ENCODE measurements at regions of chr2 and their contacts with region 1.

Region 1: DNA sequence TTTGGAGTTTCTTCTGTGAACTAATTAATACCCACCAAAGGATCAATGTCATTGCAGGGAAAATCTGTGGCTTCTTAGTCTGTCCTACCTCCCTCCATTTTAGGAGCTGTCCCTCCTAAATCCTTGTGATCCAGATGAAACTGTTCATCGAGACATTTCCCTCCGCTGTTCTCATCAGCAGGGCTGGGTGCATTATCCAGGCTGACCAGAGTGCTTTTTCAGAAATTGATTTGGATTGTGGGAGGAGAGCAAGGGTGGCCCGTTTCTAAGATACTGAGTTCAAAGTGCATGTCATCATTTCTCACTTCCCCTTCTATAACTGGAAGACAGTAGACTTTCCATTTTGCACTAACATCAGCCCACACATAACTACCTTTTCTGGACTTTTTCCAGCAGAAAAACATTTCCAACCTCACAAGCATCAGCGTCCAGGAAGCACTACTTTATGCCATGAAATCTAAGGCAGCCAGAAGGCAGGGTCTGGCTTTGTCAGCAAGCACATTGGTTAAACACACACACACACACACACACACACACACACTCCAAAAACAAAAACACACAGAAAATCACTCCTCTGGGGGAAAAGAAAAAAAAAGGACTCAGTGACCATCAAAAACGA is 94.1 kb downstream of the ANKRD44 start:
- DNase-seq: no peak

Region 2: GRCh38 chr2:197356136-197356535 is 139.7 kb after region 1 on chr2:
- in situ Hi-C with region 1: loop called (anchors 25 kb)
- DNase-seq: no peak